Activated CD8-positive, alpha-beta T cell treated with anti-CD3 and anti-CD28 coated beads for 36 hours (primary cell): ENCODE measurements at regions of chr20 and their contacts with region 1.

Region 1: GRCh38 chr20:34834459-34834893 is 9.0 kb upstream of the NCOA6 start:
- DNase-seq: no peak
- ATAC-seq: peak; percentile 37
- H3K4me3 Mint-ChIP-seq: no peak overlapping the region
- H3K27ac Mint-ChIP-seq: no peak overlapping the region
- H3K4me1 Mint-ChIP-seq: no peaks in the 10 kb centered on the region
- H3K27me3 Mint-ChIP-seq: peaks cover 15% of the 10 kb centered on the region
- CTCF ChIP-seq: peak; percentile 59

Region 2: DNA sequence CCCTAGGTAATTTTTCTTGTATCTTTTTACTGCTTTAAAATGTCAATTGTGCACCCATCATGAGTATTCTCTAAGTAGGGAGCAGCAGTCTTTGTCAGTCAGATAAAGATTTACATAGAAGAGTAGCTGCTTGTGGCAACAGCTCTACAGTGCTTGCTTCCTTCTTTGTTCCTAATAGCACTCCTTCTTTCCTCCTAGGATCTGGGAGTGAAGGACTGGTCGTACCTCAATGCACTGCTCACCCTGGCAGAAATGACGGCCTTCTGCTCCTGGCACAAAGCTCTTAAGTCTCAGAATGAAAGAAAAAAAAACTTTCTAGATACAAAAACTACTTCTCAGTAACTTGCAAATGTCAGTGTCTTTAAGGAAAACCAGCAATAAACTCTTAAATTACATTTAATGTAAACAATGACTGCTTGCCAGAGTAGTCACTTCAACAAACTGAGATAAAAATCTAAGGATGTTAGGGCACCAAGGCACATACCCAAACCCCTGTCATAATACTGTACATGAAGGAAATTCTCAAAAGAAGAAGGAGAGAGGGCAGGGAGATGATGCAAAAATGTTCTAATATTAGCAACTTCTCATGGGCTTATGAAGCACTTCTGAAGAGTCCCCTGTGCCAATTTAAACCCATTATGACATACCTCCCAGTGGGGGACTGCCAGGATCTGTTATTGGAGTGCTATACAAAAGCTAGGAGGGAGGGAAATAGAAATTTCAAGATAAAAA is 43.0 kb before region 1 on chr20:
- CTCF ChIA-PET with region 1: no interaction called
- POLR2A ChIA-PET with region 1: no interaction called
- intact Hi-C with region 1: no loop called
- DNase-seq: no peak
- ATAC-seq: no peak
- H3K4me3 Mint-ChIP-seq: no peak overlapping the region
- H3K27ac Mint-ChIP-seq: no peak overlapping the region
- H3K4me1 Mint-ChIP-seq: peaks cover 5% of the 10 kb centered on the region
- H3K27me3 Mint-ChIP-seq: no peaks in the 10 kb centered on the region
- CTCF ChIP-seq: no peak

Region 3: GRCh38 chr20:34955232-34956040 is 121.0 kb after region 1 on chr20 and contains the starts of genes GSS and MYH7B:
- CTCF ChIA-PET with region 1: interaction called, 3 read pairs
- POLR2A ChIA-PET with region 1: no interaction called
- intact Hi-C with region 1: loop called (anchors 5 kb)
- DNase-seq: peak; percentile 99
- ATAC-seq: peak; percentile 94
- H3K4me3 Mint-ChIP-seq: peak within 1 kb of the TSS; percentile 99
- H3K27ac Mint-ChIP-seq: peak within 1 kb of the TSS; percentile 97
- H3K4me1 Mint-ChIP-seq: peaks cover 26% of the 10 kb centered on the region
- H3K27me3 Mint-ChIP-seq: no peaks in the 10 kb centered on the region
- CTCF ChIP-seq: peak; percentile 45
- total RNA-seq, gene GSS: 50.9 to 52.7 TPM
- total RNA-seq, gene MYH7B: 0.22 to 0.38 TPM

Region 4: GRCh38 chr20:35207950-35208611 is 373.6 kb after region 1 on chr20:
- CTCF ChIA-PET with region 1: interaction called, 7 read pairs
- POLR2A ChIA-PET with region 1: no interaction called
- intact Hi-C with region 1: loop called (anchors 10 kb)
- DNase-seq: peak; percentile 89
- ATAC-seq: peak; percentile 91
- H3K4me3 Mint-ChIP-seq: no peak overlapping the region
- H3K27ac Mint-ChIP-seq: no peak overlapping the region
- H3K4me1 Mint-ChIP-seq: no peaks in the 10 kb centered on the region
- H3K27me3 Mint-ChIP-seq: no peaks in the 10 kb centered on the region
- CTCF ChIP-seq: peak; percentile 81